Natural killer cell (primary cell): ENCODE measurements at regions of chr14 and their contacts with region 1.

Region 1: DNA sequence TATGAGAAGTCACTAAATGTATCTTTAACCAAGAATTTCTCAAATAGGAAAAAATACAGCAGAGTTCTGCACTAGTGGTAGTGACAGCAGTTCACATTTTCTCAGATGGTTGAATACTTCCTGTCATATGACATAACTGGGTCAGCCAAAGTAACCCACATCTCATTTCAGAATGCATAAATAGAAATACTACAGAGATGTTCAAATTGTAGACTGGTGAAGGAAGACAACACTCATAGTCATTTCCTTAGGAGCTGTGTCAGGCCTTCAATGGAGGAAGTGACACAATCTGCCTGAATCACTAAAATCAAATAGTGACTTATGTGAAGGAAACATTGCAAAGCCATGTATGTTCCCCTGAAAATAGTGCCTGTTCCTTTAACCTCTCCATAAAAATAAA is 32.4 kb downstream of the FERMT2 start:
- DNase-seq: peak in 1 of 2 donors; percentile 81
- ATAC-seq: peak; percentile 89 to 97 (median 95)
- H3K4me3 ChIP-seq: no peak overlapping the region
- H3K4me3 Mint-ChIP-seq: peak overlapping the region; percentile 25
- H3K27ac ChIP-seq: peak overlapping the region; percentile 94
- H3K27ac Mint-ChIP-seq: peak overlapping the region; percentile 93
- H3K4me1 ChIP-seq: peaks cover 25% of the 10 kb centered on the region
- H3K4me1 Mint-ChIP-seq: peaks cover 52 to 62% of the 10 kb centered on the region in 2 donors
- H3K27me3 ChIP-seq: no peaks in the 10 kb centered on the region
- H3K27me3 Mint-ChIP-seq: no peaks in the 10 kb centered on the region
- CTCF ChIP-seq: no peak

Region 2: GRCh38 chr14:52835122-52835903 is 83.2 kb before region 1 on chr14:
- intact Hi-C with region 1: no loop called
- DNase-seq: no peak
- ATAC-seq: no peak
- H3K4me3 ChIP-seq: no peak overlapping the region
- H3K4me3 Mint-ChIP-seq: no peak overlapping the region
- H3K27ac ChIP-seq: no peak overlapping the region
- H3K27ac Mint-ChIP-seq: no peak overlapping the region
- H3K4me1 ChIP-seq: no peaks in the 10 kb centered on the region
- H3K4me1 Mint-ChIP-seq: no peaks in the 10 kb centered on the region
- H3K27me3 ChIP-seq: no peaks in the 10 kb centered on the region
- H3K27me3 Mint-ChIP-seq: peaks cover 0 to 3% of the 10 kb centered on the region in 2 donors
- CTCF ChIP-seq: no peak

Region 3: GRCh38 chr14:52950898-52951689 is 32.6 kb after region 1 on chr14 and contains the start of gene FERMT2:
- intact Hi-C with region 1: loop called (anchors 5 kb)
- DNase-seq: peak; percentile 23 to 31
- ATAC-seq: peak; percentile 51 to 64 (median 61)
- H3K4me3 ChIP-seq: peak within 1 kb of the TSS; percentile 35
- H3K4me3 Mint-ChIP-seq: peak within 1 kb of the TSS; percentile 90
- H3K27ac ChIP-seq: no peak within 1 kb of the TSS
- H3K27ac Mint-ChIP-seq: peak within 1 kb of the TSS in 1 of 2 donors; percentile 50
- H3K4me1 ChIP-seq: peaks cover 17% of the 10 kb centered on the region
- H3K4me1 Mint-ChIP-seq: peaks cover 20 to 25% of the 10 kb centered on the region in 2 donors
- H3K27me3 ChIP-seq: peaks cover 52% of the 10 kb centered on the region
- H3K27me3 Mint-ChIP-seq: peaks cover 42 to 44% of the 10 kb centered on the region in 2 donors
- CTCF ChIP-seq: no peak
- total RNA-seq, gene FERMT2: 0.58 to 1.7 (median 0.92) TPM

Region 4: GRCh38 chr14:53109105-53110041 is 190.9 kb after region 1 on chr14:
- intact Hi-C with region 1: no loop called
- DNase-seq: peak in 1 of 2 donors; percentile 83
- ATAC-seq: peak; percentile 78 to 85 (median 84)
- H3K4me3 ChIP-seq: peak overlapping the region; percentile 36
- H3K4me3 Mint-ChIP-seq: no peak overlapping the region
- H3K27ac ChIP-seq: peak overlapping the region; percentile 85
- H3K27ac Mint-ChIP-seq: no peak overlapping the region
- H3K4me1 ChIP-seq: peaks cover 31% of the 10 kb centered on the region
- H3K4me1 Mint-ChIP-seq: peaks cover 10 to 11% of the 10 kb centered on the region in 2 donors
- H3K27me3 ChIP-seq: no peaks in the 10 kb centered on the region
- H3K27me3 Mint-ChIP-seq: no peaks in the 10 kb centered on the region
- CTCF ChIP-seq: no peak